Left cardiac atrium (tissue), 4 donors: ENCODE measurements at regions of chr19 and their contacts with region 1.

Region 1: DNA sequence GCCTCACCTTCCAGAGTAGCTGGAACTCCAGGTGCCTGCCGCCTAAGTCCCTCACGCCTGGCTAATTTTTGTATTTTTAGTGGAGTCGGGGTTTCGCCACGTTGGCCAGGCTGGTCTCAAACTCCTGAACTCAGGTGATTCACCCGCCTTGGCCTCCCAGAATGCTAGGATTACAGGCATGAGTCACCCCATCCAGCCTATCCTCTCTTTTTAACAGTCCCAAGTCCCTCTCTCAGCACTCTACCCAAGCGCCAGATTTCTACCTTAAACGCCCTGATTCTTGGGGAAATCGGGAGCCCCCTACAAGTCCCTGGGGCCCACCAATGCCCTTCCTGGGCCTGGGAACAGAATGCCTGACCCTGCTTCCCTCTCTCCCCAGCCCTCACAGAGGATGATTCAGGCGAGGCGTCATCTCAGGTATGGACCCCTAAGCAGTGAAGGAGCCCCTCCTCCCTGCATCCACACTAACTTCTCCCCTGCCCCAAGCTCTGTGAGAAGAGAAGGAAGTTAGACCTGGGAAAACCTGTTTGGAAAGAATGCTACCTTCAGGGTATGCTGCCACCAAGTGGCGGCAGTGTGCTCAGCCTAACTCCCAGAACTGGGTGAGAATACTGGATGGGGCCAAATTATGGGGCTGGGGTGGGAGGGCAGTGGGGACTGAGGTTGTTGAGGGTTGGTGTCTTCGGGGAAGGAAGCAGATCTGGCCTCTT is 20.8 kb upstream of the EBI3 start:
- DNase-seq: no peak
- ATAC-seq: no peak

Region 2: GRCh38 chr19:3665681-3666544 is 542.6 kb before region 1 on chr19:
- intact Hi-C with region 1: loop called in 1 of 2 experiments (anchors 10 kb)
- DNase-seq: peak; percentile 72
- ATAC-seq: peak; percentile 18 to 48

Region 3: GRCh38 chr19:4144666-4145256 is 63.8 kb before region 1 on chr19:
- intact Hi-C with region 1: no loop called
- DNase-seq: no peak
- ATAC-seq: peak in 1 of 2 donors; percentile 49